ENCODE measurements at regions of chr5 and their contacts with region 1.

Region 1: DNA sequence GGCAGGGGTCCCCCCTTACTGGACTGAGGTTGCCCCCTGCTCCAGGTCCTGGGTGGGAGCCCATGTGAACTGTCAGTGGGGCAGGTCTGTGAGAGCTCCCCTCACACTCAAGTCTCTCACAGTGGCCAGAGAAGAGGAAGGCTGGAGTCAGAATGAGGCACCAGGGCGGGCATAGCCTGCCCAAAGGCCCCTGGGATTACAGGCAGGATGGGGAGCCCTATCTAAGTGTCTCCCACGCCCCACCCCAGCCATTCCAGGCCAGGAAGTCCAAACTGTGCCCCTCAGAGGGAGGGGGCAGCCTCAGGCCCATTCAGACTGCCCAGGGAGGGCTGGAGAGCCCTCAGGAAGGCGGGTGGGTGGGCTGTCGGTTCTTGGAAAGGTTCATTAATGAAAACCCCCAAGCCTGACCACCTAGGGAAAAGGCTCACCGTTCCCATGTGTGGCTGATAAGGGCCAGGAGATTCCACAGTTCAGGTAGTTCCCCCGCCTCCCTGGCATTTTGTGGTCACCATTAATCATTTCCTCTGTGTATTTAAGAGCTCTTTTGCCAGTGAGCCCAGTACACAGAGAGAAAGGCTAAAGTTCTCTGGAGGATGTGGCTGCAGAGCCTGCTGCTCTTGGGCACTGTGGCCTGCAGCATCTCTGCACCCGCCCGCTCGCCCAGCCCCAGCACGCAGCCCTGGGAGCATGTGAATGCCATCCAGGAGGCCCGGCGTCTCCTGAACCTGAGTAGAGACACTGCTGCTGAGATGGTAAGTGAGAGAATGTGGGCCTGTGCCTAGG is at the start of gene CSF2:
- DNase-seq: peak; percentile 87
- ATAC-seq: peak; percentile 88
- H3K4me3 ChIP-seq: peak within 1 kb of the TSS; percentile 62
- H3K27ac ChIP-seq: peak within 1 kb of the TSS; percentile 97
- H3K4me1 ChIP-seq: peaks cover 34% of the 10 kb centered on the region
- H3K27me3 ChIP-seq: no peaks in the 10 kb centered on the region
- CTCF ChIP-seq: no peak
- total RNA-seq, gene CSF2: 69.9 and 93.6 TPM in 2 replicates

Region 2: DNA sequence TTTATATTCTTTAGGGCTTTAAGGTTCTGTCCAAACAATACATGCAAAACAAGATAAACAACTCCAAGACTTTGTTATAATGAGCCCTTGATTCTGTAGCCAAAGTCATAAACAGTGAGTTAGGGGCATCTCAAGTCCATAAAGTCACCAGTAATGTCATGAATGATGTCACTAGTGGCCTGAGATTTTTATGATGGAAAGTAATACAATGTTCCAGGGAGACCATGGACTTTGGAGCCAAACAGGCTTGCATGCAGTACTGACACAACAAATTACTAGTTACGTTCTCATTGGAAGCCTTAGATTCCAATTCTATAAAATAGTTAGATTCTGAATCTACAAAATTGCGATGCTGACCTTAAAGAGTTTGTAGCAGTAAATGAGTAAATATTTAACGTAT is 1188.4 kb before region 1 on chr5:
- CTCF ChIA-PET with region 1: no interaction called
- POLR2A ChIA-PET with region 1: no interaction called
- intact Hi-C with region 1: no loop called
- DNase-seq: no peak
- ATAC-seq: no peak
- H3K4me3 ChIP-seq: no peak overlapping the region
- H3K27ac ChIP-seq: no peak overlapping the region
- H3K4me1 ChIP-seq: no peaks in the 10 kb centered on the region
- H3K27me3 ChIP-seq: no peaks in the 10 kb centered on the region
- CTCF ChIP-seq: no peak

Region 3: DNA sequence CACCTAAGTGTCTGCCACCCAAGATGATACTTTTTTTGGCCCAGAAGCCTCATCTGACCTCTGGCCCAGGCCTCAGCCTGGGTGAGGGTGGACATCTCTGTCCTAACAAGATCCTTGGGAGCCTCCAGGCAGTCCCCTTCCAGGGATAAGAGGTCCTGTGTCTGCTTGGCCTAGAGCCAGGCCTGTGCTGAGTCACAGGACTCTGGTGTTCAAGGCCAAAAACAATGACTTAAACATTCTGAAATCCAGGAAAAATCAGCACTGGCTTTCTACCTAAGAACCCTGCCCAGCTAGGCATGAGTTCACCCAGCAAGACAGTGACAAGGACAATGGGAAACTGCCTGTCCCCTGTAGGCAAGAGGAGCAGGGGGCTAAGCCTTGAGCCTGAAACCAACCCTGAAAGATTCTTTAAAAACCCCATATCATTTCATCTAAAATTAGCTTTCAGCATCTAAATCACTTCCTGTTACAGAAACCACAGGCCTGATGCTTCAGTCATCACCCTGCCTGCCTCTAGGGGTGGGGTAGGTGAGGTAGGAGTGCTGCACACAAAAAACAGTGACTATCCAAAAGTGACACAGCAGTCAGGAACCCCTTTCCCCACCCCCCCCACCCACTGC is 30.0 kb after region 1 on chr5:
- CTCF ChIA-PET with region 1: no interaction called
- POLR2A ChIA-PET with region 1: no interaction called
- intact Hi-C with region 1: loop called (anchors 2 kb)
- DNase-seq: peak; percentile 94
- ATAC-seq: peak; percentile 69
- H3K4me3 ChIP-seq: no peak overlapping the region
- H3K27ac ChIP-seq: peak overlapping the region; percentile 96
- H3K4me1 ChIP-seq: peaks cover 45% of the 10 kb centered on the region
- H3K27me3 ChIP-seq: no peaks in the 10 kb centered on the region
- CTCF ChIP-seq: no peak

Region 4: GRCh38 chr5:132134384-132134783 is 61.0 kb after region 1 on chr5:
- CTCF ChIA-PET with region 1: no interaction called
- POLR2A ChIA-PET with region 1: no interaction called
- intact Hi-C with region 1: loop called (anchors 2 kb)
- DNase-seq: peak; percentile 59
- ATAC-seq: peak; percentile 58
- H3K4me3 ChIP-seq: no peak overlapping the region
- H3K27ac ChIP-seq: no peak overlapping the region
- H3K4me1 ChIP-seq: no peaks in the 10 kb centered on the region; the same call in 1 of the 2 replicates
- H3K27me3 ChIP-seq: no peaks in the 10 kb centered on the region
- CTCF ChIP-seq: peak; percentile 60

Measured in PC-3 (cell line).